ENCODE measurements at regions of chr1 and their contacts with region 1.

Region 1: GRCh38 chr1:202781180-202781579 is 27.0 kb downstream of the KDM5B start:
- DNase-seq: no peak
- CTCF ChIP-seq: no peak

Region 2: GRCh38 chr1:202791077-202791747 is 10.0 kb after region 1 on chr1:
- CTCF ChIA-PET with region 1: interaction called, 16 read pairs
- POLR2A ChIA-PET with region 1: no interaction called
- DNase-seq: no peak
- CTCF ChIP-seq: no peak

Region 3: DNA sequence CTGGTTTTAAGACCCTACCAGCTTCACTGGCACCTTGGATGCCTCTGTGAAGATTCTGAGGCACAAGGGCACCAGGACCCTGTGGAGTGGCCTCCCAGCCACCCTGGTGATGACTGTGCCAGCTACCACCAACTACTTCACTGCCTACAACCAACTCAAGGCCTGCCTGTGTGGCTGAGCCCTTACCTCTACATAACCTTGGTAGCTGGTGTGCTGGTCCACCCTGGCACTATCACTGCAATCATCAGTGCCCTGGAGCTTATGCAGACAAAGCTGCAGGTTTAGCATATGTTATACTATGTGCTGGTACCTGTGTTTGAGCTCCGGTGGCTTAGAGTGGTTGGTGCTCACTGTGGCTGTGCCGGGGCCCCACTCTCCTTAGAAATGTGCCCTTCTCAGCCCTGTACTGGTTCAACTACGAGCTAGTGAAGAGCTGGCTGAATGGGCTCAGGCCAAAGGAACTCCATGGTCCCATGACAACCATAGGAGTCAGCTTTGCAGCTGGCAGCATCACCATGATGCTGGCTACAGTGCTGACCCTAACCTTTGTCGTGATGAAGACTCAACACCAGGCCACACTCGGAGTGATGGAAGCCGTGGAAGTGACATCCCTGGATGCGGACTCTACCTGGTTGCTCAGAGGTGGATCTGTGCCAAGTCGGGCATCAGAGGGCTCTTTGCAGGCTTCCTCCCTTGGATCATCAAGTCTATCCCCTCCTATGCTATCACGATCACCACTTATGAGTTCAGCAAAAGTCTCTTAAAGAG is 15.3 kb after region 1 on chr1:
- CTCF ChIA-PET with region 1: interaction called, 16 read pairs
- POLR2A ChIA-PET with region 1: no interaction called
- DNase-seq: no peak
- CTCF ChIP-seq: no peak

Measured in GM10248 (cell line).